ENCODE measurements at regions of chr17 and their contacts with region 1.

Region 1: DNA sequence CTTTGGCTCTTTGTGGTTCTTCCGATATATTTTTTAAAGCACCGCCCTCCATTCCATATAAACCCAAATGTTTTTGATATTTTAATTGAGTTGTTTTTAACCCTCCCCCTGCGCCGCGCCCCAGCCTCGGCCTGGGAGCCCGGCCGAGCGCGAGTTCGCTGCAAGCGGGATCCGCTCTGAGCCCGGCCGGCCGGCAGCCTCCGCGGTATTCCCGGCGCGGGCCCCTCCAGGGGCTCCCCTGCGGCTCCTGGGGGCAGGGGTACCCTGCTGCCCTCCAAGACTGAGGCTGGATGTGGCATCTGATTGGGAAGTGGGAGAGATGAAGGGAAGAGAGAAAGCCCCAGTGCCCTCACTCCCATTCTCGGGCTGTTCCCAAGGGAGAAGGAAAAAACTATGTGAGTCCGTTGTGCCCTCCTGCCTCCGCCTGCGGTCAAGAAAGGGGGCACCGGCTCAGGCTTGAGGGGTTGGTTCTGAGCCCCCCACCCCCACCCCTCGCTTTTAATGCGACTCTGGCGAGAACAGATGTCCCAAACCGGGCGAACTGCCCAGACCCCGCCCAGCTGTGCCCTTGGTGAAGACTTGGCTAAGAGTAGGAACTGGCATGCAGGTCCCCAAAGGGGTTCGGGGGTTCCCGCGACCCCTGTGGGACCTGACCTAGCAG is 8.6 kb downstream of the NEUROD2 start:
- DNase-seq: no peak
- H3K4me3 ChIP-seq: no peak overlapping the region
- H3K27ac ChIP-seq: no peak overlapping the region
- H3K27me3 ChIP-seq: peaks cover 94% of the 10 kb centered on the region
- CTCF ChIP-seq: no peak

Region 2: GRCh38 chr17:39508987-39509386 is 90.1 kb before region 1 on chr17:
- CTCF ChIA-PET with region 1: no interaction called
- POLR2A ChIA-PET with region 1: no interaction called
- DNase-seq: no peak
- H3K4me3 ChIP-seq: no peak overlapping the region
- H3K27ac ChIP-seq: no peak overlapping the region
- H3K27me3 ChIP-seq: no peaks in the 10 kb centered on the region
- CTCF ChIP-seq: no peak

Region 3: GRCh38 chr17:39553341-39553945 is 45.7 kb before region 1 on chr17:
- CTCF ChIA-PET with region 1: no interaction called
- POLR2A ChIA-PET with region 1: no interaction called
- DNase-seq: no peak
- H3K4me3 ChIP-seq: no peak overlapping the region
- H3K27ac ChIP-seq: peak overlapping the region; percentile 21
- H3K27me3 ChIP-seq: no peaks in the 10 kb centered on the region
- CTCF ChIP-seq: no peak

Region 4: GRCh38 chr17:39576187-39576586 is 22.9 kb before region 1 on chr17:
- CTCF ChIA-PET with region 1: interaction called, 15 read pairs
- POLR2A ChIA-PET with region 1: interaction called, 4 read pairs
- DNase-seq: no peak
- H3K4me3 ChIP-seq: no peak overlapping the region
- H3K27ac ChIP-seq: no peak overlapping the region
- H3K27me3 ChIP-seq: peaks cover 27% of the 10 kb centered on the region
- CTCF ChIP-seq: peak; percentile 63

Region 5: DNA sequence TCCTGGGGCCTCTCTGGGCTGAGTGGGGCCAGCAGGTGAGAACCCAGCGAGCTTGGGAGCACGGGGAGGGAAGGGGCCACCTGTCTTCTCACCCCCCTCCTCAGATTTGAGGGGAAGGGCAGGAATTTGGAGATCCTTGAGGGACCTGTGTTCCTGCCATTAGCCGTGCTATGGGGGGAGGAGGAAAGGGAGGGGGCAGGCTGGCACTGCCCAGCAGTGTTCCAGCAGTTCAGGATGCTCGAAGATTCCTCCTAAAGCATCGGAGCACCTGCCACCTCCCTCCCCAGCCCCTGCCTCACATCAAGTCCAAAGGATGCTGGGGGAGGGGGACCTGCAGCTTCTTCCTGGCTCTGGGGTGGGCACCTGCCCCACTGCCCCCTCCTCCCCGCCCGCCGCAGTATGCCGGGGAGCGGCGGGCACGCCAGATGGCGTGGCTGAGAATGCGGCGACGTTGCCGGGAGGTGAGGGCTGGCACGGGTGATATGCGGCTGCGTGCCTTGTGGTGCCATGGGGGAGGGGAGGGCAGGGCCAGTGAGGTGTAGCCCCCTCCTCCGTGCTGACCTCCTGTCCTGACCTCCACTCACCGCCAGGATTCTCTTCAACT is 13.3 kb after region 1 on chr17:
- CTCF ChIA-PET with region 1: no interaction called
- POLR2A ChIA-PET with region 1: no interaction called
- DNase-seq: no peak
- H3K4me3 ChIP-seq: no peak overlapping the region
- H3K27ac ChIP-seq: no peak overlapping the region
- H3K27me3 ChIP-seq: peaks cover 59% of the 10 kb centered on the region
- CTCF ChIP-seq: no peak

Region 6: GRCh38 chr17:39677542-39678339 is 78.6 kb after region 1 on chr17:
- CTCF ChIA-PET with region 1: no interaction called
- POLR2A ChIA-PET with region 1: no interaction called
- DNase-seq: no peak
- H3K4me3 ChIP-seq: no peak overlapping the region
- H3K27ac ChIP-seq: no peak overlapping the region
- H3K27me3 ChIP-seq: no peaks in the 10 kb centered on the region
- CTCF ChIP-seq: no peak